Astrocyte of the cerebellum (primary cell): ENCODE measurements at regions of chr5 and their contacts with region 1.

Region 1: DNA sequence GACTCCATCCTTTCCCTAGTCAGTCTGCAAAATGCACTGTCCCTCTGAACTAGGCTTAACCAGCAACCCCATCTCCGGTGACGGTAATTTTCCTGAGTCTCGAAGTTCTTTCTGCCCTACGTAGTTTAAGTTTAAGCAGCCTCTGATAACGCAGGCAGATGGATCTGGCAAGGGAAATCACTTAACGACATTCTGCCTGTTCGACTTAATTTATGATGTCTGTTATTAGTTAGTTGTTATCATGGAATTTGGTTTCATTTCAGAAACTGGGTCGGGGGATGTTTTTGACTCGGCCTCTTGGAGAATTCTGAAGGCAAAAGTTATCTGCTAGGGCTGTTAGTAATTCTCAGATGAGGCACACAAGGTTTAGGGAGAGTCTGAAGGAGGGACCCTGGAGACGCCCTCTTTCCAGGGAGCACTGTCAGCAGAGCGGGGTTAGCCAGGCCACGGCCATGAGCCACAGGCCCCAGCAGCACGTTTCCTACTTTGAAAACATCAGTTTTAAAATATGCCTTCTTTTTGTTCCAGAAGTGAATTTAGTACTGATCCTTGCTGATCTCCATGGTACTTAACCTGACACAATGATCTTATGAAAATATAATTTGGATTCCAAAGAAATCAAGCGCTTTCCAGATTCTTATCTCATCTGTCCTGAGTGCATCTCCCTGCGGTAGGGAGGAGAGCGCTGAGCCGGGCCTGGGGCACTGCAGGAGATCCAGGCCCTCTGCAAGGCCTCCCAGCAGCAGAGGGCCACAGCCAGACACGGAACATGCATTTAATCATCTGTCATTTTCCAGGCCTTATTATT is 171.0 kb upstream of the OTULINL start:
- DNase-seq: no peak
- H3K4me3 ChIP-seq: no peak overlapping the region
- CTCF ChIP-seq: no peak

Region 2: DNA sequence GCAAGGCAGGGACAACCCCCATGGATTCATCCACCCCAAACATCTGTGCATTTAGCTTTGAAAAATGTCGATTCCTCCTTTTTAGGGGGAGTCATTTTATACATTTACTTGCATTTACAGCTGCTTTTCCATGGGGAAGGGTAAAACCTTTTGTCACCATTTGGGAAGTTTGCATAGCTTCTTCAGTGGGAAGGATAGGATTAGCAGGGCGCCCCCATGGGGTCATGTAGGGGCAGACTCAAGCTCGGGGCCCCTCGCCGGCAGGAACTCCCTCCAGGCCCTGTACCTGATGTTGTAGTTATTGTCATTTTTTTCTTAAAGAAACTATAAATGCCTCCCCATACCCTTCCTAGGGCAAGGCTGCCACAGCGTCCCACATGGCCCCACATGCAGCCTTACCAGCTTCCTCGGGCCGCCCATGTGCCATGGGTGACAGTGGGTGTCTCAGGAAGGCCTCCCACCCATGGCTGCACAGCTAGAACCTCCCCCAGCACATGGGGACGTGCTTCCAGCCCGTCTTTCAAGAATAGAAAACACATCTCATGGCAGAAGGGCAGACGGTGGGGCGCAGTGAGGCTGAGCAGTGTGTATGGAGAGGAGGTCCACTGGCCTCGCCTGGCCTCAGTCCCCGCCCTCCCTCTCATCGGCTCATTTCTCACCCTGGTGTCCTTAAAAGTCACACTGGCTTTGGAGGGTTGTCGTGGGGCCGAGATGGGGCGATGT is 94.9 kb after region 1 on chr5:
- in situ Hi-C with region 1: loop called (anchors 5 kb)
- DNase-seq: no peak
- H3K4me3 ChIP-seq: no peak overlapping the region
- CTCF ChIP-seq: no peak